Left cardiac atrium (tissue), 4 donors: ENCODE measurements at regions of chr2 and their contacts with region 1.

Region 1: DNA sequence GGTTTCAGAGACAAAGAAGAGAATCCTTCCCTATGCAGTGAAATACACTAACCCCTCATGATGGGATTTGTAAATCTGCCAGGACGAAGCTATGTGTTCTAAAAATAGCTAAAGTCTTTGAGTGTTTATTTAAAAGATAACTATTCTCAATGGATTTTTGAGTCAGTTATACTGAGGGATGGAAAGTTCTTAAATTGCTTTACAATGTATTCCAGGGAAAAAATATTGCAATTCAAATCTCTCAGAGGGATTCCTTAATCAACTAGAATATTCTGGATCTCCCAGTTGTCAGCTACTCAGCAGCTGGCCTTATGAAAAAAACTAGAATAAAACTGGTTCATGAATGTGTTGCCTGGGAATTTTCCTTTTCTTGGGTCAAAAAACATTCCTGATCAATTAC is 312.4 kb downstream of the PLCL1 start:
- DNase-seq: no peak
- ATAC-seq: peak in 1 of 2 donors; percentile 36

Region 2: DNA sequence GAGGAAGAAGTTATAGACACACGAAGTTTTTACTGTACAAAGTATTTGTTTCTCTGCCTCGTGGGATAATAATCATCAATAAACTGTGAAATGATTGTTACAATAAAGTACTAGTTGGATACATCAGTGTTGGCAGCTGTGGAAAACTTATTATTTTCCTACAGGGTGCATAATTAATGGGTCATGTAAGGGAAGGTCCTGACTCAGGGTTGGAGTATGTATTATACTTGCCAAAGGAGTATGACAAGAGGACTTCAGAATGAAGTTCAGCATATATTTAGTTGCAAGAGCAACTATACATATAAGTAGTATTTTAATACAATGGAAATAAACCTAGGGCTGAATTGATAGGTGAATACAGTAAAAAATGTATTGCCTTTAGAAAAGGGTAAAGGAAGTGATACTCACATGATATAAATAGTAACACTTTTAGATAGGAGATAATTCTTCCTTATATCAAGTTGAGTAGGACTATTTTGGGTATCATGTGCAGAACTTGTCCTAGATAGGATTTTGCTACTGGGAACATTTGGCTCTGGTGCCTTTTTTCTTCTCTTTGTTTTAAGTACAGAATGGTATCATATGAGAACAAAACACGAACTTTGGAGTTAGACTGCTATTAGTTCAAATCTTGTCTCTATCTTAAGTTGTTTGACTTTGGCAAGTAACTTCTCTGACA is 233.3 kb before region 1 on chr2:
- intact Hi-C with region 1: no loop called
- DNase-seq: no peak
- ATAC-seq: peak in 1 of 2 donors; percentile 45

Region 3: GRCh38 chr2:197969391-197969893 is 147.3 kb before region 1 on chr2:
- intact Hi-C with region 1: loop called in 1 of 2 experiments (anchors 10 kb)
- DNase-seq: no peak
- ATAC-seq: peak; percentile 91 to 98